ENCODE measurements at regions of chr2 and their contacts with region 1.

Region 1: DNA sequence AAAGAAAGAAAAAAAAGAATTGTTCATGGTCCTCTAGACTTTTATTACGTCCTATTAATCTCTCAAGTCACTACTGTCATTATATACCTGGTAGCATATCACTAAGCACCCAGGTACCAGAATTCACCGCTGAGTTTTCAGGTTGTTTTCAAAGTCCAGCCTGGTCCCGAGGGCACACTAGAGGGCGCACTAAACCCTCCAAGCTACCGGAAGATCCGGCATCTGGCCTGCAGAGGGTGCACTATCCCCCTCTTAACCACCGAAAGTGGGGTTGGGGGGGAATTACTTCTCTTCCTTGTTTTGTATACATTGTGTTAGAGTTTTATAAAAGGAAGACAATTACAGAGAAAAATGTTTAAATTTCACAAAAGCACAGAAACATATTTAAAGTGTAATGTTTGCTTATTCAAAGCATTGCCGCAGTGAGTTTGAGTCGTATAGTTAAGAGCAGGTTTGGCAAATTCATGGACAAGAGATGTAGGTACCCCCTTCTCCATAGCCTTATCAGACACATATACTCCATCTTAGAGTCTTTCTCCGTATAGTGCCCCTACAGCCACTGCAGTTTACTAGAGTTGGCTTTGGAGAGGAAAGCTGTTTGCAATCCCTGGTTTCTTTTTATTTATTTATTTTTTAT is 19.2 kb downstream of the MOGAT1 start:
- DNase-seq: peak; percentile 93
- H3K27ac ChIP-seq: no peak overlapping the region
- CTCF ChIP-seq: peak; percentile 96

Region 2: DNA sequence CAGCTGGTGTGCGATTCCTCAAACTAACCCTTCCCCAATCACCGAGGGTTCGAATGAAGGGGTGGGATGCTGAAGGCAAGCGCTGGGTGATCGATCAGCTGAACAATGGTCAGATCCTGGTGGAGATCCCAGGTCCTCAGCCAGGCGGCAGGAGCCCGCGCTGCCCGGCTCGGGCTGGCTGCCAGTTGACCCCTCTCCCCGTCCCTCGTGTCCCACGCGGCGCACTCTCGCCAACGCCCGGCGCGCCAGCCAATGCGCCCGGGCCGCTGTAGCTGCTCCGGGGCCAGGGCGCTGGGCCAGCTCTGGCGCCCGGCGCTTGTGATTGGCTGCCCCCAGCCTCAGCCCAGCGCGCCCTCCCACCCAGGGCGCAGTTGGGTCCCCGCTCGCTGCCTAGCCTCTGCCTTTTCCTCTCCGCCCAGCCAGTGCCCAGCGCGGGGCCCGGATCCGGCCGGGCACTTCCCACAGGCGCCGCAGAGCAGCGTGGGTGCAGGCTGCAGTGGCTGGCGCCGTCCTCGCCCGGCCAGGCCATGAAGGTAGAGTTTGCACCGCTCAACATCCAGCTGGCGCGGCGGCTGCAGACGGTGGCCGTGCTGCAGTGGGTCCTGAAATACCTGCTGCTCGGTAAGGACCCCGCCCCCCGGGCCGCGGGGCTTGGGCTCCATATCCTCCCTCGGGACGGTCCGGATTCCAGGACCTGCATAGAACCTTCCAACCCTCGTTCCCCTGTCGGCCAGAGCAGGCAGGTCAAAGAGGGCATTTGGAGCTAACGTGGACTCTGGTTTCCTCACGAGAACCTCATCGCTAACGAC is 19.2 kb before region 1 on chr2 and contains the start of gene MOGAT1:
- CTCF ChIA-PET with region 1: interaction called, 10 read pairs
- POLR2A ChIA-PET with region 1: interaction called, 3 read pairs
- DNase-seq: no peak
- H3K27ac ChIP-seq: no peak within 1 kb of the TSS
- CTCF ChIP-seq: no peak